CD4-positive, alpha-beta T cell (primary cell): ENCODE measurements at regions of chr2 and their contacts with region 1.

Region 1: DNA sequence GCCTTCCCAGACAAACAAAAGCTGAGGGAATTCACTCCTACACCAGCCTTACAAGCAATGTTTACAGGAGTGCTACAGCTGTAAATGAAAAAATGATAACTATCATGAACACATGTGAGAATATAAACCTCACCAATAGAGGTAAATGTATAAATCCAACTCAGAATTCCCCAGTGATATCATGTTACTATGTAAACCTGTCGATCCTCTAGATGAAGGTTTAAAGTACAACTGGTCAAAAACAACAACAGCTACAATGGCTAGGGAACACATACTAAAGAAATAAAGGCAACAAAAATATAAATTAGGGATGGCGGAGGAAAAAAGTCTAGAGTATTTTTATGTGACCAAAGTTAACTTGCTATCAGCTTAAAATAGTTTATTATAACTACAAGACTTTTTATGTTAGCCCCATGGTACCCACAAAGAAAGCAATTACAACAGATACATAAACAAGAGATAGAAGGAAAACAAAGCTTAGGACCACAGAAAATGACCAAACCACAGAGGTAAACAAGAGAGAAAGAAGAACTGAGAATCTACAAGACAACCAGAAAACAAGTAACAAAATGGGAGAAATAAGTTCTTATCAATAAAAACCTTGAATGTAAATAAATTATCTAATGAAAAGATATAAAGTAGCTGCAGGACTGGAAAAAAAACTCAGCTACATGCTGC is 8.3 kb downstream of the CERKL start:
- DNase-seq: no peak
- ATAC-seq: no peak
- H3K4me3 ChIP-seq: no peak overlapping the region
- H3K4me3 Mint-ChIP-seq: no peak overlapping the region
- H3K27ac ChIP-seq: no peak overlapping the region
- H3K27ac Mint-ChIP-seq: no peak overlapping the region
- H3K4me1 ChIP-seq: no peaks in the 10 kb centered on the region
- H3K4me1 Mint-ChIP-seq: no peaks in the 10 kb centered on the region
- H3K27me3 ChIP-seq: peaks cover 0 to 17% of the 10 kb centered on the region in 2 experiments
- H3K27me3 Mint-ChIP-seq: peaks cover 49% of the 10 kb centered on the region
- CTCF ChIP-seq: no peak

Region 2: DNA sequence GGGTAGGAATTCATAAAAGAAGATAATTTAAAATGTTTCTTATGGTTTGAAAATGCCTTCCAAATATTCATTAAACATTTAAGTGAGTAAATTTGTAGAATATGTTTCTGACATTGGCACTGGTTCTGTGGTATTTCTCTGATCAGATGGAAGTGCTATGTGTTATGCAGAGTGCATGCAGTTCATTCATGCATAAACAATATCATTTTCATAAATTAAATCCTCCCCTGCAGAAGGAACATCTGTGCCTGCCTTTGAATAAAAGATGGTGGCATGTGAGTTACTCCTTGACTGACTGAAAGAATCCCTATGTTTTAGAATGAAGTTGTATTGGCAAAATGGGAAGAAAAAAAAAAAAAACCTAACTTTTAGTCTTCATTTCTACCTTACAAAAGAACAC is 25.8 kb after region 1 on chr2:
- CTCF ChIA-PET with region 1: no interaction called
- POLR2A ChIA-PET with region 1: no interaction called
- intact Hi-C with region 1: loop called in 1 of 2 experiments (anchors 1 kb)
- DNase-seq: no peak
- ATAC-seq: no peak
- H3K4me3 ChIP-seq: no peak overlapping the region
- H3K4me3 Mint-ChIP-seq: no peak overlapping the region
- H3K27ac ChIP-seq: no peak overlapping the region
- H3K27ac Mint-ChIP-seq: no peak overlapping the region
- H3K4me1 ChIP-seq: peaks cover 8% of the 10 kb centered on the region
- H3K4me1 Mint-ChIP-seq: peaks cover 8% of the 10 kb centered on the region
- H3K27me3 ChIP-seq: peaks cover 21 to 56% of the 10 kb centered on the region in 2 experiments
- H3K27me3 Mint-ChIP-seq: peaks cover 66% of the 10 kb centered on the region
- CTCF ChIP-seq: no peak